Left ventricle myocardium superior (tissue), 1 donor: ENCODE measurements at regions of chrX and their contacts with region 1.

Region 1: DNA sequence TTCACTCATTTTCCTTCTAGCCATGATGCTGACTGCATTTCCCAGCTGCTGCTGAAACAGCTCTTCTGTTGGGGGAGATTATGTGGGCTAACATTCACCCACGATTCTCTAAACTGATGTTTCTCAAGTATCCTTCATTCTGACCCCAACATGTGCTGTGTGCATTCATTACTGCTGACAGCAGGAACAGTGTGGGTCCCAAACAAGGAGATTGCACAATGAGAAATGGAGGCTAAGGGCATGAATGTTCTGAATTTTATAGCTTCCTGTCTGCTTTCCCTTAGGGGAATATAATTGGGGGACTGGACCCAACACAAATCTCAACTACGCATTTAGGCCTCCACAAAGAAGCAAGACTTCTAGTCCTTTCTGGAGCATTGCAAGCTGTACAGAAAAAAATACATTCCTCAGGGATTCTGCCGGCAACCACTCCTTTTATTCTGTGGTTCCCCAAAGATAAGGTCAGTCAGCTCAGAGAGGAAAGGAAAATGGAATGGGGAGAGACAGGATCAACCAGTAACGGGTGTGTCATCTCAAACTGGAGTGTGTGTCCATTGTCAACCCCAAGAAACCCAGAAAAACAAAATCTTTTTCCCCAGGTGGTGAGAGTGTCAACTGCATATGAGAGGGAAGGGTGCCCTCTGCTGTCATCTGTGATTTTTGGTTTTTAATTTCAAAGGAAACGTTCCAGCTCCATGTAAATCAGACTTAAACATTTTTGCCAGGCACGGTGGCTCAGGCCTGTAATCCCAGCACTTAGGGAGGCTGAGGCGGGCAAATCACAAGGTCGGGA is 81.5 kb upstream of the EGFL6 start:
- DNase-seq: no peak
- ATAC-seq: peak; percentile 86

Region 2: DNA sequence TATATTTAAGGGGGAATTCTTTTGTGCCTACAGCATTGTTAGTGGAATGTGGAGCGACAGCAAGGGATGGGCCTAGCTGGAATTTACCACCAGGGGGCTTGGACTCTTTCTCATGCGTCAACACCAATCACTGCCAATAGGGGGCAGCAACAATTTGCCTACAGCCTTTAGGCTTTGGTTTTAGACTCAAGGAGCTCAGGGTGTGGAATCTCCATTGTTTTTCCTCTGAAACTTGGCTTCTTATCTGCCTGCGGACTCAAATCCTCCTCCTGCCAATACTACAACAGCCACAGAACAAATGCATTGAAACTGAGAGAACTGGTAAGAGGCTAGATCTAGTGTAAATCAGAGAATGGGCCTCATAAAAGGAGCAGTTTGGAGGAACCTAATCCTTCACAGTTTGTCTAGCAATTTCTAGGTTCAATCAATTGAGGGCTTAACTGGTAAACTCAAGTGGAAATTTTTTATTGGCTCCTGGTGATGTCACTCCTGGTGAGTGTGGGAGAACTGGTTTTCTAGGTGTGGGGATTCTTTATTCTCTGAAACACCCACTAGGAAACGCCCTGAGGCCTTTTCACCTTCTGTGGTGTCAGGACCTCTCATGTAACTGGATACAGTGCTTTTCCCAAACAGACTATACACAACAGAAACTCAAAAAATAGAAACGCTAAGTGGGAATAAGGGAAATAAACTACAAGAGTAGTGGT is 540.9 kb before region 1 on chrX:
- intact Hi-C with region 1: loop called (anchors 10 kb)
- DNase-seq: no peak
- ATAC-seq: peak; percentile 74

Region 3: DNA sequence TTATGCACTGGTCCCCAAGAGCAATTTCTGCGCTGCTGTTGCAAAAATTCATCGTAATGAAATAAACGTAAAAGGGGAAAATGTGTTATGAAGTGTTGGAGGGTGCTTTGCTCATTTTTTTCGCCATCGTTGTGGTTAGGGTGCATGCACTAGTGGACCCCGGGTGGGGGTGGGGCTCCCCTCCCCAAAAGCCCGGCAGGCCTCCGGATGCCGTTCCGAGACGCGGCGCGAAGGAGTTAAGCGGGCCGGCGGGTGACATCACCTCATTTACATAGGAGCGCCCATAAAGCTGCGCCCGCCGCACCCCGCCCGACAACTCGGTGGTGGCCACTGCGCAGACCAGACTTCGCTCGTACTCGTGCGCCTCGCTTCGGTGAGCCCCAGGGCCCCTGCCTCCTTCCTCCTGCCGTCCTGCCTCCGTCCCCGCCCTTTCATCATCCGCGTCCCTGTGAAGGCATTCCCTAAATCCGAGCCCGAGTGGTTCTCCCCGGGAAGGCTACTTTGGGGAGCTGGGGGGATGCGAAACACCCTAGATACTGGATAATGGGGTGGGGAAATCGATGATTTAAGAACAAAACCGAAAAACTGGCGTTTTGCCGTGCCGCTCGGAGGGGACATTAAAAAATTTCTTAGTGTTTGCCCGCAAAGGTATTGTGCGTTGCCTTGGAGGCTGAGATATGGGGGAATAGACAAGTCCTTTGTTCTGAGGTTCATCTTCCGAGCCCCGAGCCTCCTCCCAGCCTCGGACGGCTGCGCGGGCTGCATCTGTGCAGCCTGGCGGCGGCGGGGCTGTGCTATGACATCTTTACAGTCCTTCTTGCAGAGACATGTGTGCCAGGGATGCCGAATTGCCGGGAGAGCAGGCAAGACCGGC is 512.9 kb before region 1 on chrX and contains the start of gene TMSB4X:
- intact Hi-C with region 1: loop called (anchors 10 kb)
- DNase-seq: peak; percentile 87
- ATAC-seq: peak; percentile 85
- total RNA-seq, gene TMSB4X: 942 TPM

Region 4: GRCh38 chrX:13123857-13124345 is 364.0 kb before region 1 on chrX:
- intact Hi-C with region 1: loop called (anchors 10 kb)
- DNase-seq: no peak
- ATAC-seq: no peak

Region 5: GRCh38 chrX:13254076-13254785 is 233.7 kb before region 1 on chrX:
- intact Hi-C with region 1: no loop called
- DNase-seq: peak; percentile 32
- ATAC-seq: no peak

Region 6: DNA sequence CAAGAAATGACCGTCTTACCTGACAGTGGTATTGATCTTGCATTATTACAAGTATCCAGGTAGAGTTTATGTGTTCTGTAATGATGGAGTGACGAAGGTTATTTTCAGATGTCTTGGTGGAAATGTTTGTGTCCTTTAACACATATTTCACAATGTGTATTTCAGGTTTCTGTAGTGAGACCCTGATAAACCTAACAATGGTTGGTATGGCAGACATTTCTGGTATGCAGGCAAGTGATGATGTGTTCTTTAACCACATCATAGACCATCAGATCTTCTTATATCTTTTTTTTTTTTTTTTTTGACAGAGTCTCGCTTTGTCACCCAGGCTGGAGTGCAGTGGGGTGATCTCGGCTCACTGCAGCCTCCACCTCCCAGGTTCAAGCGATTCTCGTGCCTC is 153.4 kb before region 1 on chrX:
- intact Hi-C with region 1: no loop called
- DNase-seq: no peak
- ATAC-seq: no peak